Left lung (tissue), 14 donors: ENCODE measurements at regions of chr16 and their contacts with region 1.

Region 1: GRCh38 chr16:56519459-56520250 is at the start of gene BBS2:
- DNase-seq: peak; percentile 79 to 96 (median 92)
- ATAC-seq: peak; percentile 98
- H3K4me3 ChIP-seq: peak within 1 kb of the TSS; percentile 81 to 89
- H3K27ac ChIP-seq: peak within 1 kb of the TSS; percentile 65 to 80
- H3K4me1 ChIP-seq: peaks cover 8 to 14% of the 10 kb centered on the region in 2 donors
- H3K27me3 ChIP-seq: no peaks in the 10 kb centered on the region
- CTCF ChIP-seq: peak in 1 of 2 donors; percentile 12
- polyA plus RNA-seq, gene BBS2: 74.5 to 109 (median 85.3) TPM

Region 2: DNA sequence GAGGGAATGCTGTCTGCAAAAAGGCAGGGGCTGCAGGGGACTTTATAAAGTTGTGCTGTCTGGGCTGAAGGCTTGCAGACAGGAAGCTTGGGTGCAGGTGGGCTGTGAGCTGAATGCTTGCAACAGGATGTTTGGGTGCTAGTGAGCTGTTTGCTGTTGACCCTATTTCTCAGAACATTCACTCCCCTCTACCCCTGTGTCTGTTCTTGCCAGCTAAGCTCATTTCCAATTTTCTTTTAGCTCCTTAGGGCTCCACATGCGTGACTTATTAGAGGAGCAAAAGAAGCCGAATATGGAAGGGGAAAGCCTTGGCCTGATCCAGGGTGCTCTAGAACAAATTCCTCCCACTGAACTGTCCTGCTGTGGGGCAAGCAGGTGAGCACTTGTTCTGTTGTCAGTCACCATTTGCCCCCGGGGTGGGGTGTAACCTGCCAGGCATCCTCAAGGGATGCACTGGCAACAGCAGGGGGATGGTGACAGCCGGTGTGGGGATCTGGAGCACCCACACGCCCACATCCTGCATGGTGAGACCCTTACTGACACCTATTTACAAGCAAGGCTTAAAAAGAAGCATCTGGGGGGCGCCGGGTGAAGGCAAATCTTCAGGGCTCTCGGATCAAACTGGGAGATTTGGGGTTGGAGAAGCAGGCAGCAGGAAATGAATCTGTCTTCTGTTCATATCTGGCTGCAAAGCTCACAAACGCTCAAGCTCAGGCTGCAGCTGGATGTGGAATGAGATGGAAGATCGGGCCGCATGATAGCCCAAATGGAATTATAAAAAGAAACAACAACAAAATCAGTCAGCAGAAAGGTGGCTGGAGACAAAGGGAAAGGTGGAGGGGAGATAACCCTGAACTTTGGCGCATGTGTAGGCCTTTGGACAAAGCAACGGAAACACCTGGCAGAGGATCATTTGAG is 189.1 kb after region 1 on chr16:
- intact Hi-C with region 1: loop called in 1 of 2 experiments (anchors 10 kb)
- DNase-seq: no peak
- ATAC-seq: no peak
- H3K4me3 ChIP-seq: no peak overlapping the region
- H3K27ac ChIP-seq: no peak overlapping the region
- H3K4me1 ChIP-seq: no peaks in the 10 kb centered on the region
- H3K27me3 ChIP-seq: no peaks in the 10 kb centered on the region
- CTCF ChIP-seq: no peak